Endothelial cell of umbilical vein (primary cell): ENCODE measurements at regions of chr2 and their contacts with region 1.

Region 1: DNA sequence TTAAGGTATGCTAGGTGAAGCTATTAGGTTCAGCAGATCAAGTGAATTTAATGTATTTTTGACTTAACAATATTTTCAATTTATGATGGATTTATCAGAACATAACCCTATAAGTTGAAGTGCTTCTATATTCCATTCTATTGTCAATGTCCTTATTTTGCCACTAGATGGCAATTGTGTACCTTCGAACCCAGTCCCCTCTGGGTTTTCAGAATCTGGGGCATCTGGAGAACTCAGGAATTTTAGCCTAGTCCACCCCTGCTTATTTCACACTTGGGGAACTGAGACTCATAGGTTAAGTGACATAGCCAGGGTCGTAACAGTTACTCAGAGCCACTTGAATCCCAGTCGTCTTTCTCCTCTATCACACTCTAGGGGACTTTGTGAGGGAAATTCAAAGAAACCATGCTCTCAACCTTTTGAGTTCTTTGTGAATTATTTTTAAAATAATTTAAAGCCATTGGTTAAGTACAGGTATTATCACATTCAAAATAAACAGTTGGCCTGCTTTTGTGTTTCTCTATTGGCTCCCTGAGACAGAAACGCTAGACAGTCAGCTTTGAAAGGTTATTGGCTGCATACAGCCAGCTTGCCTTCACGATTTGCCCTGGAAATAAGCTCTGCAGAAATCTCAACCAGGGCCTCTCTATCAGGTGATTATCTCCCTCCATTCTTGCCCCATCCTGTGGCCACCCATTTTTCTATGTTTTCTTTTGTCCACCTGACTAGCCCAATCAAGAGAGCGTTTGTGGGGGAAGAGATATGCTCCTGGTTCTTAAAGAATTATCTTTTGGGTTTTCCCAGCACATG is 145.0 kb downstream of the TTC27 start:
- DNase-seq: peak; percentile 75
- H3K4me3 ChIP-seq: no peak overlapping the region
- H3K27ac ChIP-seq: no peak overlapping the region
- H3K4me1 ChIP-seq: peaks cover 3% of the 10 kb centered on the region
- H3K27me3 ChIP-seq: no peaks in the 10 kb centered on the region
- CTCF ChIP-seq: peak; percentile 38 to 53
- POLR2A ChIP-seq: no peak

Region 2: DNA sequence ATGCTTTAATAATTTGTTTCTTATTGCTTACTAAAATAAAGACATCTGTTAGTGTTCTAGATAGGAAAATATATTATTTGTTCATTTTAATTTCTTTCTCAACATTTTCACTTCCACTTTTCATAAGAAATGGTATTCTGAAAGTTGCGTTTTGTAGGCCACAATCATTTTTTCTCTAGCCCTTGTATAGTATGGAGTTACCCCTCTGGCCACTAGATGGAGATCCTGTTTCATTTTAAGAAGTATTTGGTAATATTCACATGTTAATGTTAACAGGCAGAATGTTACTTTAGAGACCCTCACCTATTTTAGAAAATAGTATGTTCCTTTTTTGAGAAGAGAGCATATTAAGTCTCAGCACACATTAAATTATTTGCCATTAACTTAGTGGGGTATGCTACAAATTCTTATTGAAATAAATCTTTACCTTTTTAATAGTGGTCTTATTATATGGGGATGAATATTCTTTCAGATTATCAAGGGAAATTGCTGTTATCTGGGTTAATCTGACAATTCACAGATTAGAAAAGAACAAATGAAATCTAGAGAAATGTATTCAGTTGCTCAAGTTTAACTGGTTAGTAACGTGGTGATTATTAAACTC is 218.9 kb before region 1 on chr2:
- CTCF ChIA-PET with region 1: no interaction called
- POLR2A ChIA-PET with region 1: no interaction called
- dilution Hi-C with region 1: no loop called
- intact Hi-C with region 1: loop called (anchors 2 kb)
- DNase-seq: peak; percentile 63
- H3K4me3 ChIP-seq: no peak overlapping the region
- H3K27ac ChIP-seq: no peak overlapping the region
- H3K4me1 ChIP-seq: peaks cover 7% of the 10 kb centered on the region
- H3K27me3 ChIP-seq: no peaks in the 10 kb centered on the region
- CTCF ChIP-seq: peak; percentile 50
- POLR2A ChIP-seq: no peak

Region 3: DNA sequence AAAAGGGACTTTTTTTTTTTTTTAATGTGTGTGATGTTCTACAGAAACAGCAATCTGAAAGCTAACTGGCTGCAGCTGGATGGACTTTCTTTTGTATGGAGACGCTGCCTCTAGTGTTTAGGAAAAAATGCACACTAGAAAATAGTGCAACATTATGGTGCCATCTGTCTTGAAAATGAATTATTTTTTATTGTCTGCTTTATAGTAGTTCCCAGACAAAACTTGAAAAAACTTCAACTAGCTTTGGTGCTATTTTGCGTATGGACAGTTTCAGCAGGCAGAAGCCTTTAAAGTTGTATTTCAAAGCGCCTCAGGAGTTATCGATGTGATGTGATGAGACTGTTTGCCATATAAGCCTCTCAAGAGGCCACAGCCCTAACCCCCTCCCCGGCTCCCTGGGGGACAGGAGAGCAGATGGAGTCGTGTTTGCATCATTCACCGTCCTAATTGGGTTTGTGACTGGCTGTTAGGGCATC is 260.8 kb after region 1 on chr2:
- CTCF ChIA-PET with region 1: interaction called, 39 read pairs
- POLR2A ChIA-PET with region 1: no interaction called
- dilution Hi-C with region 1: no loop called
- intact Hi-C with region 1: loop called (anchors 1 kb)
- DNase-seq: peak; percentile 67
- H3K4me3 ChIP-seq: no peak overlapping the region
- H3K27ac ChIP-seq: no peak overlapping the region
- H3K4me1 ChIP-seq: peaks cover 15% of the 10 kb centered on the region
- H3K27me3 ChIP-seq: no peaks in the 10 kb centered on the region
- CTCF ChIP-seq: peak; percentile 13 to 46
- POLR2A ChIP-seq: no peak

Region 4: GRCh38 chr2:33380001-33380609 is 607.3 kb after region 1 on chr2:
- CTCF ChIA-PET with region 1: interaction called, 7 read pairs
- POLR2A ChIA-PET with region 1: no interaction called
- dilution Hi-C with region 1: no loop called
- intact Hi-C with region 1: loop called (anchors 2 kb)
- DNase-seq: no peak
- H3K4me3 ChIP-seq: no peak overlapping the region
- H3K27ac ChIP-seq: no peak overlapping the region
- H3K4me1 ChIP-seq: peaks cover 3% of the 10 kb centered on the region
- H3K27me3 ChIP-seq: no peaks in the 10 kb centered on the region
- CTCF ChIP-seq: peak; percentile 44 to 58
- POLR2A ChIP-seq: no peak

Region 5: DNA sequence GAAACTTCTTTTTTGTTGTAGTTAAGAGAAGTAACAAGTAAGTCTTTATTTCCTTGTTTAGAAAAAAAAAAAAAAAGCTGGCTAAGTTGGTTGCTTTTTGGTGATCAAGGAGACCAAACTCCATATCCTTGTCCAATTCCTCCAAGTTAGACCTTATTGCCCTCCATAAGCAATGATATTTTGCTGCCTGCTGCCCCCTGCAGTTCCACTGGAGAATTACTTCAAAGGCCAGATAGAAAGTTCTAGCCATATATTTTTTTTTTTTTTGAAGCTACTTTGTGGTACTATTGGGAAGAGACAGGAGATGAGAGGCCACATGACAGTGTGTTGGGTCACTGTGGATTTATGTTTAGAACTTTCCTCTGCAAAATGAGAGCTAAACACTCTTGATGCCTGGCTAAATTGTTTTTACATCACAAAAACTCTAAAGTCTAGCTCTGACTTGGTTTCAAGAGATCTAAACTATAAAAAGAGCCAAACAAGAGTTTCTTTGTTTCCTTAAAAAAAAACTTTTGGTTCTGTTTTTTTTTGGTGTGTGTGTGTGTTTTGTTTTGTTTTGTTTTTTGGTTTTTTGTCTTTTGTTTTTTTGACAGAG is 622.9 kb after region 1 on chr2:
- CTCF ChIA-PET with region 1: interaction called, 23 read pairs
- POLR2A ChIA-PET with region 1: no interaction called
- dilution Hi-C with region 1: no loop called
- intact Hi-C with region 1: loop called (anchors 1 kb)
- DNase-seq: peak; percentile 76
- H3K4me3 ChIP-seq: no peak overlapping the region
- H3K27ac ChIP-seq: no peak overlapping the region
- H3K4me1 ChIP-seq: no peaks in the 10 kb centered on the region
- H3K27me3 ChIP-seq: no peaks in the 10 kb centered on the region
- CTCF ChIP-seq: peak; percentile 56 to 58
- POLR2A ChIP-seq: no peak

Region 6: GRCh38 chr2:33498291-33498956 is 725.6 kb after region 1 on chr2:
- CTCF ChIA-PET with region 1: no interaction called
- POLR2A ChIA-PET with region 1: no interaction called
- dilution Hi-C with region 1: no loop called
- intact Hi-C with region 1: no loop called
- DNase-seq: no peak
- H3K4me3 ChIP-seq: no peak overlapping the region
- H3K27ac ChIP-seq: no peak overlapping the region
- H3K4me1 ChIP-seq: peaks cover 29% of the 10 kb centered on the region
- H3K27me3 ChIP-seq: peaks cover 5 to 13% of the 10 kb centered on the region in 2 experiments
- CTCF ChIP-seq: no peak
- POLR2A ChIP-seq: no peak